Gastrocnemius medialis (tissue), 4 donors: ENCODE measurements at regions of chr2 and their contacts with region 1.

Region 1: DNA sequence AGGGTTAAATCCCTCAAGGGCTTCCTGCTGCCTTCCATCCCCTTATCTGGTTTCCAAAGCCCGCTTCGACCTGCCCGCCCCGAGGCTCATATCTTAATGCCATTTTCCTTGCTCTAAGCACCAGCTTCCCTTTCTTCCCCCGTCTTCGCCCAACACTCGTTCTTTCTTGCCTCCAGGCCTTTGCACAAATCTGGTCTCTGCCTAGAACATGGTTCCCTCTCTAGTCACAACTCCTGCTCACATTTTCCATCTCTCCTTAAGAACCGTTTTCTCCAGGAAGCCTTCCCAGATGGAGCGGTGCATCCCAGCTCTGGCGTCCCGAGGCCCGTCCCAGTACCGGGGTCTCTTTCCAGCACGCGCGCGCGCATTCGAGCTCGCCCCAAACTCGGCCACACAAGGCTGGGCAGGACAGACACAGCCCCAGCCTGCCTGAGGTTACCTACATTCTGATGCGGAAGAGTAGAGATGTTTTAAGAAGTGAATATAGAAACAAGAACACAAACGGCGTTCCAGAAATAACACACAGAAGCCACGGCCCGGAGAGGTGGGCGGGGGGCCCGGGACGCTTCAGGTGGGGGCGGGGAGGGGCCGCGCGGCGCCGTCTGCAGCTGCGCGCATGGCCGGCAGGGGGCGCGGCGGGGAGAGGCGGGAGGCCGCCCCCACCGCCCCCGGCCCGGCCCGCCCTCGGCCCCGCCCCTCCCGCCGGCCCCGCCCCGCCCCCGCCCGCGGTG is at the start of gene DGKD:
- DNase-seq: peak in 1 of 2 donors; percentile 27
- ATAC-seq: peak; percentile 75 to 83
- H3K4me3 ChIP-seq: peak within 1 kb of the TSS; percentile 64 to 74 (median 68)
- H3K27ac ChIP-seq: peak within 1 kb of the TSS; percentile 49 to 63 (median 50)
- H3K4me1 ChIP-seq: peaks cover 21 to 36% of the 10 kb centered on the region in 2 donors
- H3K27me3 ChIP-seq: no peaks in the 10 kb centered on the region
- CTCF ChIP-seq: peak in 2 of 5 experiments; percentile 55 to 78
- POLR2A ChIP-seq: no peak
- total RNA-seq, gene DGKD: 26.3 to 41.3 (median 30.4) TPM

Region 2: GRCh38 chr2:233338046-233338445 is 15.9 kb before region 1 on chr2:
- in situ Hi-C with region 1: no loop called
- intact Hi-C with region 1: no loop called
- DNase-seq: no peak
- ATAC-seq: no peak
- H3K4me3 ChIP-seq: no peak overlapping the region
- H3K27ac ChIP-seq: no peak overlapping the region
- H3K4me1 ChIP-seq: no peaks in the 10 kb centered on the region
- H3K27me3 ChIP-seq: no peaks in the 10 kb centered on the region
- CTCF ChIP-seq: no peak
- POLR2A ChIP-seq: no peak

Region 3: GRCh38 chr2:233443468-233444183 is 89.7 kb after region 1 on chr2:
- in situ Hi-C with region 1: loop called in 1 of 4 experiments (anchors 5 kb)
- intact Hi-C with region 1: loop called (anchors 2 kb)
- DNase-seq: peak; percentile 74 to 80
- ATAC-seq: peak; percentile 79
- H3K4me3 ChIP-seq: no peak overlapping the region
- H3K27ac ChIP-seq: peak overlapping the region; percentile 46 to 96 (median 67)
- H3K4me1 ChIP-seq: peaks cover 12 to 47% of the 10 kb centered on the region in 2 donors
- H3K27me3 ChIP-seq: no peaks in the 10 kb centered on the region
- CTCF ChIP-seq: peak; percentile 85 to 90 (median 89)
- POLR2A ChIP-seq: no peak

Region 4: DNA sequence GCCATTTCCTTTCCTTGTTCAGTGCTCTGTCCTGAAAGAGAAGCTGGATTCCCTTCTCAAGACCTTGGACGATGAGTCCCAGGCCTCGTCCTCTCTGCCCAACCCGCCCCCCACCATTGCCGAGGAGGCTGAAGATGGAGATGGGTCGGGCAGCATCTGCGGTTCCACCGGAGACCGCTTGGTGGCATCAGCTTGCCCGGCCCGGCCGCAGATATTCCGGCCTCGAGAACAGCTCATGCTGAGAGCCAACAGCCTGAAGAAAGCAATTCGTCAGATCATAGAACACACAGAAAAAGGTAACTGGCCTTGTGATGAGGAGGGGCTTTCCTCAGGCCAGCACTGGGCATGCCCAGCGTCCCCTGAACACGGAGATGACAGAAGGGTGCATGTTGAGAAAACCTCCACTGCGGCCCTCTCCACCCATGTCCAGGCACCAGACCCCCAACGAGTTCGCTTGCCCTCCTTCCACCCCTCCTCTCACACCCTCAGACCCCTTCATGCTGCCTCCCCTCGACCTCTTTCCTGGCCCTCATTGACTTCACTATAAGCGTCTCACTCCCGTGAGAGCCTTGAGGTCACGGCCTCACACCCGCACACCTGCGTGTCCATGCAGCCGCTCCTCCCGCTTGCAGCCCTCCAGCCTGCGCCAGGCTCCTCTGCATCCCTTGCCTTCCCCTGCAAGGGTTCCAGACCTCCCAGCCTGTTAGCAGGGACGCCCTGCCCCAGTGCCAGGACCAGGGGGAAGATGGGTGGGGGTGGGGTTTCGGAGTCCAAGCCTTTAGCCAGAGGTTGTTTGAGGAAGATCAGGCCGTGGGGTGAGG is 95.4 kb after region 1 on chr2:
- in situ Hi-C with region 1: loop called in 1 of 4 experiments (anchors 5 kb)
- intact Hi-C with region 1: no loop called
- DNase-seq: peak in 1 of 2 donors; percentile 24
- ATAC-seq: peak in 1 of 2 donors; percentile 18
- H3K4me3 ChIP-seq: no peak overlapping the region
- H3K27ac ChIP-seq: peak overlapping the region in 1 of 4 donors; percentile 52
- H3K4me1 ChIP-seq: no peaks in the 10 kb centered on the region
- H3K27me3 ChIP-seq: no peaks in the 10 kb centered on the region
- CTCF ChIP-seq: peak in 2 of 5 experiments; percentile 8 to 35
- POLR2A ChIP-seq: no peak

Region 5: DNA sequence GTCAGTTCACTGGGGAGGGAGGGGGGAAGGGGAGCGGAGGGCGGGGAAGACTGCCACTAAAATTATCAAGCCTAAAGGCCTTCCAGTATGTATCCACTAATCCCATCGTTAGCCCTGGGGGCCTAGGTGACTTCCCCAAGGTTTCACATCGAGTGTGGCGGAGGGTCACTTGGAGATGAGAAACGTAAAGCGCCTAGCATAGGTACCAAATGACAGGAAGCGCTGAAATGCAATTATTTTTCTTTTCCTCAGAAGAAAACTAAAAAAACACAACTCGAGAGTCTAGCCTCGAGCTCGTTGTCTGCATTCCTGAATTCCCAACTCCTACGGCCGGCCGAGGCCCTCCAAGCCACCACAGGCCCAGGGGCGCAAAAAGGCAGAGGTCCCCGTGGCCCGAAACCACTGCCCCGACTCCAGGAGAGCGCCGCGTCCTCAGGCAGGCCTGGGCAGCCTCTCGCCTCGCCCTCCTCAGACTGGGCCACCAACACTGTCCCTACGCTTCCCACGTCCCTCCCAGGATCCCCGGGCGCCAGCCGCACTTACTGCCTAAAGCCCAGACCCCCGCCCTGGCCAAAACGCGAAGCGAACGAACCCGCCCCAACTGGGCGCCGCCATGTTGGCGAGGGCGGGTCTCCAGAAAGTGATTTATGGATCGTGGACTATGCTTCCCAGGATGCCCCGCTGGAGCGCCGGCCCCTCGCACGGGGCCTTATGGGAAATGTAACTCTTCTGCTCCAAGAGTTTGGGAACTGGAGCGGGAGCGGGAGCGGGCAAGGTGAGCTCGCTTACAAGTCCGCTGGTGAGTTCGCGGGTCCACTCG is 212.4 kb after region 1 on chr2 and contains the start of gene USP40:
- in situ Hi-C with region 1: no loop called
- intact Hi-C with region 1: loop called (anchors 10 kb)
- DNase-seq: peak; percentile 75 to 89
- ATAC-seq: peak; percentile 98 to 99
- H3K4me3 ChIP-seq: peak within 1 kb of the TSS; percentile 73 to 97 (median 88)
- H3K27ac ChIP-seq: peak within 1 kb of the TSS; percentile 88 to 94 (median 92)
- H3K4me1 ChIP-seq: peaks cover 12% of the 10 kb centered on the region in 2 donors
- H3K27me3 ChIP-seq: no peaks in the 10 kb centered on the region
- CTCF ChIP-seq: no peak
- POLR2A ChIP-seq: peak; percentile 72 to 78
- total RNA-seq, gene USP40: 10.9 to 29.2 (median 12.4) TPM